AG04450 (cell line): ENCODE measurements at regions of chr4 and their contacts with region 1.

Region 1: GRCh38 chr4:89434364-89434988 is 126.9 kb upstream of the GPRIN3 start:
- DNase-seq: no peak
- H3K4me3 ChIP-seq: no peak overlapping the region
- H3K27ac ChIP-seq: no peak overlapping the region
- H3K27me3 ChIP-seq: no peaks in the 10 kb centered on the region
- CTCF ChIP-seq: peak; percentile 87

Region 2: DNA sequence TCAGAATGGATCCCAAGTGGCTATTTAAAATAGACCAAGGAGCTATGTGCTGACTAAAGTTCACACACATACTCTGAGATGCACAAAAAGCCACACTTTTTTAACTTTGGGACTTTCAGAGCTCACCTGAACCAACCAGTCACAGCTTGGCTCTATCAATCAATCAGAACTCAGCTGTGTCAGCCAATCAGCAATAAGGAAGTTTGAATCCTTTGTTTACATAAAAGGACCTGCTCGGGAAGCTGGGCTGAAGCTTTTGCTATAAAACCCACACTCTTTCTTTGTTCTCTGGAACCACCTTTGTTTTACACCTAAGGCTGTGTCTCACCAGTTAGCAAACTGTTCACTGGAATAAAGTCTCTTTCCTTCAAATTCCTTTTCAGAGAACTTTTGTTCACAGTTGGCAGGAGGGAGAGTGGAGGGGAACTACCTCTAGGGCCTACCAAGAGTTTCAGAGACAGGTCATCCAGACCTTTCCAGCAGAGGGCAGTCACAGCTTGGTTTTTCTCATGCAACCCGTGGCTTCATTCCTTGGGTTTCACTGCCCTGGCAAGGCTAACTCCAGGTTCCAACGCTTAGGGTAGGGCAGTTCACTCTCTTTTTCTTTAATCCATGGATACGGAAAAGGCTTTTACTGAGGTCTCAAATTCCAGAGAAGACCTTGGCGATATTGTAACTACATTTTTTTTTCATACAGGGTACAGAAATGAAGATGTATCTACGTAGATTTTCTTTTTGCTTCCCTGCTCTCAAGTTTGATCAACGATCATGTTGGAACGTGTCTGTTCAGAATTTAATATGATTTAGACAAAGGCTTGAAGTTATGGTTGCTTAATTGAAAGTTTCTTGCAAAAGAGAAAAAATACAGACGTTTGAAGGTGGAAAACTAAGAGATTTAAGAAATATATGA is 207.6 kb before region 1 on chr4:
- CTCF ChIA-PET with region 1: interaction called, 42 read pairs
- POLR2A ChIA-PET with region 1: no interaction called
- DNase-seq: peak; percentile 29
- H3K4me3 ChIP-seq: no peak overlapping the region
- H3K27ac ChIP-seq: no peak overlapping the region
- H3K27me3 ChIP-seq: no peaks in the 10 kb centered on the region
- CTCF ChIP-seq: peak; percentile 76

Region 3: DNA sequence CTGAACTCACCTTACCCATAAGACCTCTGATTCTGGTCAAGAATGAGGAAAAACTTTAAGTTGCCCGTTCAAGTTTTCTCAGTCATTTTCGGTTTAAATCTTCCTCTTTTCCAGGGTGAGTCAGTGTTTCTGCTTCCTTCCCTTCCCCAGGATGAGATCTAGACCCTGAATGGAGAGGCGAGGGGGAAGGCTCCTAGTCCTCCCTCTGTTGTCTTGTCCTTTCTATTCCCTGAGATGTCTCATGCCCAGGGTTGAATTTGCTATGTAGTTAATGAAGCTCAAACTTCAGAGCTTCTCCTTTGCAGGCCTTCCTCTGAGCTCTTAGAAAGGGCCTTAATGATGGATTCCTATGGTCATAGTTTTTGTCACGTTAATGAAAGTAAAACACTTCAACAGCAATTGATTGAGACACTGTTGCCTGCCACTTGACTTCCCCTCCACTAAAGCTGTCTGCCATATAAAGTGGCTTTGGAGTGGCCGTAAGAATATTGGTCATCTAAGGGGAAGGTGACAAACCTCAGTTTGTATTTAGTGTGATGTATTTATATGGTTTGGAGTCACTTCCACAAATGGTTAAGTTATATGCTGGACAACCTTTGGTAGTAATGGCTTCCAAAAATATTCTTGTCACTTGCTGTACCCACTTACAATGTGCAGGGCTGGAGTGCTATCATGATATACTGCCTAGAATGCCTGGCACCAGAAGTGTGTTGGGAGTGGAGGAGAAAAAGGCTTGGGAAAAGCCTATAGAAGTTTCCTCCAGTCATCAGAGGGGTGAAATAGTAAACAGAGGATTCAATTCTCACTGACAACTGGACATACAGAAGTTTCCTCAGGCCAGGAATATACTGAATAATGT is 102.6 kb before region 1 on chr4:
- CTCF ChIA-PET with region 1: no interaction called
- POLR2A ChIA-PET with region 1: no interaction called
- DNase-seq: no peak
- H3K4me3 ChIP-seq: no peak overlapping the region
- H3K27ac ChIP-seq: no peak overlapping the region
- H3K27me3 ChIP-seq: no peaks in the 10 kb centered on the region
- CTCF ChIP-seq: no peak